Dendritic cell treated with granulocyte-macrophage colony-stimulating factor and Interleukin-4, amounts not matched to agents 40 ng/mL and 50 ng/mL, for 4 days (primary cell): ENCODE measurements at regions of chr12 and their contacts with region 1.

Region 1: DNA sequence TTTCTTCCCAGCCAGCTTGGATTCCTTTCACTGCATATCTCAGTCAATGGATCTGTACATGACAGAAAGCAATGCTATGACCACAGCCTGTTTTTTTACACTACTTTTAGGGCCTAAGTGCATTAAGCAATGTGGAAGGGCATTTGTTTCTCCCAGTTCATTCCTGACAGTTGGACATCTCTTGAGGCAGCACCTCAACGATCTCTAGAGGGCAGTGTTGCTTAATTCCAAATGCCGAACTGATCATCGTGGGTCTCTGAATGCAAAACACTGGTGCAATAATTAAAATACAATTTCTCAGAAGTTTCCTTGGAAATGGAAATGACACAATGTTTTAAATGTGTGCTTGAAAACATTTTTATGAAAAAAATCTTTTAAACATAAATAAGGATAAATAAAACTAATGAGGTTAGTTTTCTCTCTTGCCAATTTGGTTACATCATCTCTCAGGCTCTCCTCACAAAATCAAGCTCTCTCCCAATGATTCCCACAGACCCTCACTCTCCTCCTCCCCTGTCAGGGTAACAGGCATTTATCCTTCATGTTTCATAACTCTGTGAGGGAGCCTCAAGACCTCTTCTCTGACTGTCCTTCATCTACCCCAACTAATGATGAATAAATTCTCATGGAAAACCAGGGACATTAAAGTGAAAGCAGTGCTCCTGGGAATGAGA is 192.4 kb upstream of the SLC16A7 start:
- H3K4me3 Mint-ChIP-seq: no peak overlapping the region
- H3K27ac Mint-ChIP-seq: no peak overlapping the region
- H3K4me1 Mint-ChIP-seq: peaks cover 5% of the 10 kb centered on the region
- H3K27me3 Mint-ChIP-seq: peaks cover 1% of the 10 kb centered on the region

Region 2: DNA sequence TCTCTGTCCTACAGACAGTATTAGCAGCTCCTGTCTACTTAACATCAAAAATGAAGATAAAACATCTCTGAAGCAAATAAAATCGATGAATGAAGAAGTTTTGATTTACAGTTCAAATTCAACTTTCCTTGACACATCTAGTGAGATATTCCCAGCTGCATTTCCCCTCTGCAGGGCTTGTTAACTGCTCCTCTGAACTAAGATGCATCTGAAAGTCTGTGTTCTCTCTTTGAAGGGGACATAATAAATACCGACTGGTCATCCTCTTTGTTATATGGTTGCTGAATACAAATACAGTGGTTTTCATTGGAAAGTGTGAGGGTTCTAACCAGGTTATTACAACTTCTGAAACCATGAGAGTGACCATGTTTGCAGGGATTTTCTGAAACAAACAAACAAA is 73.9 kb before region 1 on chr12:
- intact Hi-C with region 1: no loop called
- H3K4me3 Mint-ChIP-seq: no peak overlapping the region
- H3K27ac Mint-ChIP-seq: no peak overlapping the region
- H3K4me1 Mint-ChIP-seq: no peaks in the 10 kb centered on the region
- H3K27me3 Mint-ChIP-seq: no peaks in the 10 kb centered on the region

Region 3: GRCh38 chr12:59808317-59808910 is 405.0 kb after region 1 on chr12:
- intact Hi-C with region 1: loop called (anchors 1 kb)
- H3K4me3 Mint-ChIP-seq: no peak overlapping the region
- H3K27ac Mint-ChIP-seq: no peak overlapping the region
- H3K4me1 Mint-ChIP-seq: no peaks in the 10 kb centered on the region
- H3K27me3 Mint-ChIP-seq: no peaks in the 10 kb centered on the region

Region 4: DNA sequence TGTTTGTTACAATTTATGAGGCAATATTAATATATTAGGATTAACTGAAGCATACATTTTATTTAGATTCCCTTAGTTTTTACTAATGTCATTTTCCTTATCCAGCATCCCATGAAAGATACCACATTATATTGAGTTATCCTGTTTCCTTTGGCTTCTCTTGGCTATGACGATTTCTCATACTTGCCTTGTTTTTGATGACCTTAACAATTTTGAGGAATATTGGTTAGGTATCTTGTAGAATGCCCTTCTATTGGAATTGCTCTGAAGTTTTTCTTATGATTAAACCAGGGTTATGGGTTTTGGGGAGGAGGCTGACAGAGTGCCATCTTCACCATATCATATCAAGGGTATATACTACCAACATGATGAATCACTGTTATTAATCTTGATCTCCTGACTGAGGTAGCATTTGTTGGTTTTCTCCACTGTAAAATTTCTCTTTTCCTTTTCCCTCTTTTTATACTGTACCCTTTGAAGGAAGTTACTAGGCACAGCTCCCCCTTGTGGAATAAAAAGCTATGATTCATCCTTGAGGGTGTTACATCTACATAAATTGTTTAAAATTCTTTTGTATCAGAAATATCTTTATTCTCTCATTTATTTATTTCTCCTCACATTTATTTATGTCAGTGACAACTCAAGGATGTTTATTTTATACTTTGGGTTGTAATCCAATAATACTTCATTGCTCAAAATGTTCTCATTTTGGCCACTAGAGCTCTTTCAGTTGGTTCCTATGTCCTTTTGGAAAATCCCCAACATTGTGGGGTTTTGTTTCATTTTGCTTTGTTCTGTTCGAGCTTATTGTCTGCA is 431.5 kb after region 1 on chr12:
- intact Hi-C with region 1: loop called (anchors 2 kb)
- H3K4me3 Mint-ChIP-seq: no peak overlapping the region
- H3K27ac Mint-ChIP-seq: no peak overlapping the region
- H3K4me1 Mint-ChIP-seq: no peaks in the 10 kb centered on the region
- H3K27me3 Mint-ChIP-seq: no peaks in the 10 kb centered on the region